ENCODE measurements at regions of chr2 and their contacts with region 1.

Region 1: GRCh38 chr2:133886735-133887660 is 318.7 kb upstream of the NCKAP5 start:
- DNase-seq: peak; percentile 43 to 50 (median 50)
- H3K4me3 ChIP-seq: no peak overlapping the region
- H3K4me3 Mint-ChIP-seq: no peak overlapping the region
- H3K27ac ChIP-seq: no peak overlapping the region
- H3K27ac Mint-ChIP-seq: no peak overlapping the region
- H3K4me1 ChIP-seq: no peaks in the 10 kb centered on the region
- H3K4me1 Mint-ChIP-seq: peaks cover 0 to 2% (median under 1%) of the 10 kb centered on the region in 4 donors
- H3K27me3 ChIP-seq: no peaks in the 10 kb centered on the region
- H3K27me3 Mint-ChIP-seq: peaks cover 0 to 7% of the 10 kb centered on the region in 2 donors

Region 2: DNA sequence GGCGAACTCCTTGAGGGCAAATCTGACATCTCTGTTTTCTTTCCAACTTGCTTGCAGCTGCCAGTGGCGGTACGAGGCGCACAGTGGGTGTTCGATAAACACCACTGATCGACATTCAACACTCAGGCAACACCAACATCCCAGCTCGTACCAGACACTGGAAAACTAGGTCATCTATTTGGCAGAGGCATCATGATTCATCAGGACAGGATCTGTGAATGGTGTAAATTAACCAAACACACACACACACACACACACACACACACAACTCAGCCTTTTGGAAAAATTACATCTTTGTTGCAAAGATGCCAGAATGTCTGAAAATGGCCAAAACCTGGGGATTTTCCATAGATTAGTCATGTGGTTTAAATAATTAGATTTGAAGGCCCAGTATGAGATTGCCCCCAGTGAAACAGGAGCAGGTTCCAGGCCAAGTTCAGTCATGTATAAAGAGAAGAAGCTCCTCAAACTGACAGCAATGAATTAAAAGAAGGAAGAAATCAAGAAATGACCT is 168.3 kb before region 1 on chr2:
- CTCF ChIA-PET with region 1: no interaction called
- POLR2A ChIA-PET with region 1: no interaction called
- intact Hi-C with region 1: no loop called
- DNase-seq: no peak
- H3K4me3 ChIP-seq: no peak overlapping the region
- H3K4me3 Mint-ChIP-seq: no peak overlapping the region
- H3K27ac ChIP-seq: no peak overlapping the region
- H3K27ac Mint-ChIP-seq: no peak overlapping the region
- H3K4me1 ChIP-seq: no peaks in the 10 kb centered on the region
- H3K4me1 Mint-ChIP-seq: no peaks in the 10 kb centered on the region
- H3K27me3 ChIP-seq: no peaks in the 10 kb centered on the region
- H3K27me3 Mint-ChIP-seq: no peaks in the 10 kb centered on the region

Region 3: DNA sequence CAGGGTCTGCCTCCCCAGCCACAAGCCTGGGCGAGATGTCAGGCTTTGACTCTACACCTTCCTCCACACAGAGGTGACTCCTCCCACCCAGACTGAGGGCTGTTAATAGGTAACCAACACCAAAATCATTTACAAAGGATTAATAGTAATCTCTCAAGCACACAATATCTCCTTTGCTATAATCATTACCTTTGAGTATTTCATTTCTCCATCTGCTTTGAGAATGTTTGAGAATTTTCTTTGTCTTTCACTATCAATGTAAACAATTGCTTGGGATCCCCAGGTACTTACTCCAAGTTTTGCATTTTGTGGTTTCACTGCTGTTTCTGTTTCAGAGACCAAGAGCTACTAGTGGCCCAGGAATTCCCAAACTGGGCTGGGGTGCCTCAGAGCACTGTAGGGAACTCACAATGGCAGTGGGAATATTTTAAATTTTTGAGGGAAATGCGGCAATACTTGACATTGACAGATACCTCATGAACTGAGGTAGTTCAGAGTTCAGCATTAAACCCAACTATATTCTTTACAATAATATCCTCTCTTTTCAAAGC is 200.4 kb after region 1 on chr2:
- CTCF ChIA-PET with region 1: interaction called, 3 read pairs
- POLR2A ChIA-PET with region 1: no interaction called
- intact Hi-C with region 1: loop called (anchors 10 kb)
- DNase-seq: no peak
- H3K4me3 ChIP-seq: no peak overlapping the region
- H3K4me3 Mint-ChIP-seq: no peak overlapping the region
- H3K27ac ChIP-seq: no peak overlapping the region
- H3K27ac Mint-ChIP-seq: no peak overlapping the region
- H3K4me1 ChIP-seq: no peaks in the 10 kb centered on the region
- H3K4me1 Mint-ChIP-seq: peaks cover 0 to 1% (median 0%) of the 10 kb centered on the region in 4 donors
- H3K27me3 ChIP-seq: no peaks in the 10 kb centered on the region
- H3K27me3 Mint-ChIP-seq: peaks cover 0 to 2% of the 10 kb centered on the region in 2 donors

Region 4: GRCh38 chr2:134368009-134368817 is 481.2 kb after region 1 on chr2:
- CTCF ChIA-PET with region 1: no interaction called
- POLR2A ChIA-PET with region 1: no interaction called
- intact Hi-C with region 1: loop called (anchors 5 kb)
- DNase-seq: peak in 1 of 5 donors; percentile 21
- H3K4me3 ChIP-seq: no peak overlapping the region
- H3K4me3 Mint-ChIP-seq: peak overlapping the region in 2 of 8 donors; percentile 44 to 64
- H3K27ac ChIP-seq: no peak overlapping the region
- H3K27ac Mint-ChIP-seq: peak overlapping the region in 5 of 7 donors; percentile 38 to 86 (median 75)
- H3K4me1 ChIP-seq: peaks cover 31% of the 10 kb centered on the region
- H3K4me1 Mint-ChIP-seq: peaks cover 35 to 46% (median 43%) of the 10 kb centered on the region in 4 donors
- H3K27me3 ChIP-seq: no peaks in the 10 kb centered on the region
- H3K27me3 Mint-ChIP-seq: no peaks in the 10 kb centered on the region

Region 5: DNA sequence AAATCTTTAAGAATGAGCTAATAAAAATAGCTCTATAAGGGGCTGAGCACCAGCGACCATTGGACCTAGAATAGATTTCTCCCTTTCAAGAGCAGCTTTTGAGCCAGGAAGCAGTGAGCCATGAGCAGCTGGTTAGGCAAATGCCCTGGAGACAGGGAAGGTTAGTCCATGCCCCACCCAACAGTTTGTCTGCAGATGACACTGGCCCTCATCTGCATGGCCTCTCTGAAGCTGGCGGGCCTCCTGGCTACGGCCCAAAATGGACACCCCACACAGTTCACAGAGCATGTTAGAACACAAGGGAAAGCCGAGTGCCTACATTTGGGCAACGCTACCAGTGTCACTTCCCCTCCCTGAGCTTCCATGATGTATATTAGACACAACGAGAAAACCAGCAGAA is 567.9 kb after region 1 on chr2:
- CTCF ChIA-PET with region 1: interaction called, 5 read pairs
- POLR2A ChIA-PET with region 1: no interaction called
- intact Hi-C with region 1: loop called (anchors 1 kb)
- DNase-seq: no peak
- H3K4me3 ChIP-seq: no peak overlapping the region
- H3K4me3 Mint-ChIP-seq: peak overlapping the region in 1 of 8 donors; percentile 17
- H3K27ac ChIP-seq: no peak overlapping the region
- H3K27ac Mint-ChIP-seq: peak overlapping the region in 1 of 7 donors; percentile 46
- H3K4me1 ChIP-seq: no peaks in the 10 kb centered on the region
- H3K4me1 Mint-ChIP-seq: peaks cover 0 to 15% (median 0%) of the 10 kb centered on the region in 4 donors
- H3K27me3 ChIP-seq: no peaks in the 10 kb centered on the region
- H3K27me3 Mint-ChIP-seq: no peaks in the 10 kb centered on the region

Measured in CD4-positive, alpha-beta memory T cell (primary cell).